ENCODE measurements at regions of chr15 and their contacts with region 1.

Region 1: GRCh38 chr15:85879332-85880163 is 84.8 kb upstream of the KLHL25 start:
- ATAC-seq: peak in 7 of 8 experiments; percentile 38 to 83 (median 65)
- H3K4me3 ChIP-seq: no peak overlapping the region
- H3K27ac ChIP-seq: no peak overlapping the region
- H3K4me1 ChIP-seq: no peaks in the 10 kb centered on the region

Region 2: DNA sequence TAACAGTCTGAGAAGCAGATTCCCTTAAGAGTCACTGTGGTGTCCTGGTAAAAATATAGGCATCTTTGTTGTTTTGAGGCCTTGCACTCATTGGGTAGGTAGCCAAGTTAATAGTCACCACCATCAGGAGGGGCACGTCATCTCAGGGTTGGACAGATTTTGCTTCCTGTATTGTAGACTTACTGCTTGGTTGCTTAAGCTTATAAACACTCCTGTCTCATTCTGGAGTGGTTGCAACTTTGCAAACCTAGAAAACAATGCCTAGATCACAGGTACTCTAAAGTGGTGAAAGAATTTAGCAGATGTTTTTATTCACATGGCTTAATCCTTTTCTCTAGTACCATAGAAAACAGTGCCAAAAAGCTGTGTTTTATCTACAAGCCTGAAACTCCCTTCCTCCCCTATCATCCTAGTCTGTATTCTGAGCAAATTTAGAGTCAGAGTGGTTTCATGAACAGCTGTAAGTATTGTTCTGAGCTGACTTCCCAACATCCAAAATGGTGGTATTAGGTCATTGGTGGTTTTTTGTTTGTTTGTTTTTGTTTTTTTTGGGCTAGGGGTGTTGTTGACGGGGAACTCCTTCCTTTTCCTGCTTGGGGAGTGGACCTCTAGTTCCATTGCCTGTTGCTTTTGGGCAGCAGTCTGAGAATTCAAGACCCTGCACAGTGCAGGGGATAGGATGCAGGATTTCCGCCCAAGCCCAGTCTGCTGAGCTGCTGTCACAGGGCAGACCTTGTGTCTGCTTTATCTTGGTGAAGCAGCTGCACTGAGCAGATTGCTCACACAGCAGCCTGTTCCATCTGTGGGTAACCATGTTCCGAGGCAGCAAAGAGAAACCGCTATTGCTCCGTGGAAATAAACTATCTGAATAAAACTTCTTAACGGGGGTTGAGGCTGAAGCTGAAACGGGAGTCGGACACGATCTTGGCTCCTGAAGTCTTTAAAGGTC is 297.1 kb before region 1 on chr15:
- in situ Hi-C with region 1: no loop called
- ATAC-seq: peak in 3 of 8 experiments; percentile 33 to 48 (median 35)
- H3K4me3 ChIP-seq: no peak overlapping the region
- H3K27ac ChIP-seq: no peak overlapping the region
- H3K4me1 ChIP-seq: peaks cover 3 to 5% of the 10 kb centered on the region in 2 donors

Region 3: DNA sequence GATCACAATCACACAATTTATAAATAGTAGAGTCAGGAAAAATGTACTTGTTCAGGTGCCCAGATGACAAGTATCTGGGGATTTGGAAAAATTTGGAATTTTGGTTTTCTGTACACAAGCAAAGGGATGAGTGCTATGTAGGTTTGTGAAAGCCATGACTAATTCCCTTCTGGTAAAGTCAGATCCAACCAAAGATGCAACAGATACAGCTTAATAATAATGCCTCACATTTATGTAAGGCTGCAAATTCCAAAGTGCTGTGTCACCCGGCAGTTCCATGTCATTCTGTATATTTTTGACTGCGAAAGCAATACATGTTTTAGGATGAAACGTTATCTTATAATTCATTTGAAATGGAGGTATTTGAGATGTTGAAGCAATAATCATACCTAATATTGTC is 97.4 kb after region 1 on chr15:
- in situ Hi-C with region 1: loop called in 1 of 9 experiments (anchors 25 kb)
- ATAC-seq: no peak
- H3K4me3 ChIP-seq: no peak overlapping the region
- H3K27ac ChIP-seq: no peak overlapping the region
- H3K4me1 ChIP-seq: peaks cover 0 to 10% of the 10 kb centered on the region in 2 donors